ENCODE measurements at regions of chr10 and their contacts with region 1.

Region 1: DNA sequence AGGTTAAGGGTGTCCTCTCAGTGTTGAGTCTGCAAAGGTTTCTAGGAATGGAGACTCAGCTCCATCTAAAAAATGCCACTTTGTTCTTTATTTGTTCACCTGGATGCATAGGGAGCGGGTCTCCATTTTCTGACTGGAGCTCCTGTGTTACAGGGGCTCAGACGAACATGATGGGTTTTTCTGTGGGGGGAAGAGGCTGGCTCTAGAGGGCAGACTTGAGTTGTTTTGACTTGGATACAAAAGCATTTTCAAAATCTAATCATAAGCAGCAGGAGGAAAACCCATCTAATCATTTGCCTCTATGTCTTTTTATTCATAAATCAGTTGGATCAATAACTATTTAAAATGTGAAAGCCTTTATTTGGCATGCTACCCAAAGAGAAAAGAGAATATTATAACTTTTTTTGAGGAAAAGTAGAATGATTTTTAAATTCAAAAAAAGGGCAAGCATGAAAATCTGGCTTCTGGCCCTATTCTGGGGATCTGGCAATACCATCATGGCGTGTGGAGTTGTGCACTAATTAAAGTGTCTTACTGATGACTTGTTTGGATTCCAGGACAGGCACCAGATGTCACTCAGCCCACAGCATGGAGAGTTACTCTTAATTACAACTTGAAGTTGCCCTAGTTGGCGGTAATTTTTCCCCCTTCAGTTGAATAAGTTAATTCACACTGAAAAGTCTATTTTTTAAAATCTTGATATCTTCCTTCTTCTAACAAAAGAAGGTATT is 594.9 kb downstream of the REEP3 start:
- DNase-seq: no peak
- ATAC-seq: peak; percentile 76
- H3K4me3 ChIP-seq: no peak overlapping the region
- H3K27ac ChIP-seq: no peak overlapping the region
- H3K4me1 ChIP-seq: no peaks in the 10 kb centered on the region
- H3K27me3 ChIP-seq: no peaks in the 10 kb centered on the region
- CTCF ChIP-seq: peak; percentile 30 to 67 (median 65); a peak in 5 of 6 replicates
- POLR2A ChIP-seq: no peak
- RAD21 ChIP-seq: peak; percentile 59

Region 2: GRCh38 chr10:64130152-64130551 is 14.1 kb after region 1 on chr10:
- CTCF ChIA-PET with region 1: interaction called, 10 read pairs
- POLR2A ChIA-PET with region 1: no interaction called
- RAD21 ChIA-PET with region 1: no interaction called
- intact Hi-C with region 1: no loop called
- DNase-seq: no peak
- ATAC-seq: peak; percentile 64
- H3K4me3 ChIP-seq: no peak overlapping the region
- H3K27ac ChIP-seq: no peak overlapping the region
- H3K4me1 ChIP-seq: no peaks in the 10 kb centered on the region
- H3K27me3 ChIP-seq: no peaks in the 10 kb centered on the region
- CTCF ChIP-seq: peak in 2 of 3 experiments; percentile 21 to 25; a peak in 1 of 6 replicates
- POLR2A ChIP-seq: no peak
- RAD21 ChIP-seq: no peak

Measured in HCT116 (cell line).